Naive thymus-derived CD4-positive, alpha-beta T cell (primary cell): ENCODE measurements at regions of chrX and their contacts with region 1.

Region 1: GRCh38 chrX:56813318-56813837 is 84.3 kb downstream of the NBDY start:
- DNase-seq: peak; percentile 11 to 75 (median 62)
- ATAC-seq: peak; percentile 87
- H3K4me3 ChIP-seq: peak overlapping the region; percentile 40
- H3K4me3 Mint-ChIP-seq: peak overlapping the region; percentile 63 to 85 (median 82)
- H3K27ac ChIP-seq: peak overlapping the region; percentile 72
- H3K27ac Mint-ChIP-seq: peak overlapping the region; percentile 85 to 99 (median 95)
- H3K4me1 ChIP-seq: peaks cover 14 to 30% of the 10 kb centered on the region in 2 donors
- H3K4me1 Mint-ChIP-seq: peaks cover 19 to 52% (median 44%) of the 10 kb centered on the region in 7 donors
- H3K27me3 ChIP-seq: no peaks in the 10 kb centered on the region
- H3K27me3 Mint-ChIP-seq: no peaks in the 10 kb centered on the region

Region 2: GRCh38 chrX:56563231-56564161 is 249.9 kb before region 1 on chrX and contains the start of gene UBQLN2:
- CTCF ChIA-PET with region 1: no interaction called
- POLR2A ChIA-PET with region 1: no interaction called
- intact Hi-C with region 1: loop called (anchors 2 to 10 kb)
- DNase-seq: peak; percentile 57 to 78 (median 74)
- ATAC-seq: peak; percentile 89
- H3K4me3 ChIP-seq: peak within 1 kb of the TSS; percentile 98
- H3K4me3 Mint-ChIP-seq: peak within 1 kb of the TSS; percentile 88 to 98 (median 94)
- H3K27ac ChIP-seq: peak within 1 kb of the TSS; percentile 85
- H3K27ac Mint-ChIP-seq: peak within 1 kb of the TSS; percentile 93 to 100 (median 98)
- H3K4me1 ChIP-seq: peaks cover 4 to 5% of the 10 kb centered on the region in 2 donors
- H3K4me1 Mint-ChIP-seq: peaks cover 5 to 20% (median 15%) of the 10 kb centered on the region in 7 donors
- H3K27me3 ChIP-seq: no peaks in the 10 kb centered on the region
- H3K27me3 Mint-ChIP-seq: no peaks in the 10 kb centered on the region
- total RNA-seq, gene UBQLN2: 48.8 to 76.5 (median 56.8) TPM

Region 3: GRCh38 chrX:56793521-56794320 is 19.7 kb before region 1 on chrX:
- CTCF ChIA-PET with region 1: no interaction called
- POLR2A ChIA-PET with region 1: interaction called, 3 read pairs
- intact Hi-C with region 1: loop called in 1 of 2 experiments (anchors 1 kb)
- DNase-seq: no peak
- ATAC-seq: no peak
- H3K4me3 ChIP-seq: no peak overlapping the region
- H3K4me3 Mint-ChIP-seq: peak overlapping the region in 1 of 10 donors; percentile 25
- H3K27ac ChIP-seq: no peak overlapping the region
- H3K27ac Mint-ChIP-seq: peak overlapping the region in 8 of 9 donors; percentile 14 to 81 (median 68)
- H3K4me1 ChIP-seq: peaks cover 8 to 16% of the 10 kb centered on the region in 2 donors
- H3K4me1 Mint-ChIP-seq: peaks cover 35 to 69% (median 54%) of the 10 kb centered on the region in 7 donors
- H3K27me3 ChIP-seq: no peaks in the 10 kb centered on the region
- H3K27me3 Mint-ChIP-seq: no peaks in the 10 kb centered on the region

Region 4: DNA sequence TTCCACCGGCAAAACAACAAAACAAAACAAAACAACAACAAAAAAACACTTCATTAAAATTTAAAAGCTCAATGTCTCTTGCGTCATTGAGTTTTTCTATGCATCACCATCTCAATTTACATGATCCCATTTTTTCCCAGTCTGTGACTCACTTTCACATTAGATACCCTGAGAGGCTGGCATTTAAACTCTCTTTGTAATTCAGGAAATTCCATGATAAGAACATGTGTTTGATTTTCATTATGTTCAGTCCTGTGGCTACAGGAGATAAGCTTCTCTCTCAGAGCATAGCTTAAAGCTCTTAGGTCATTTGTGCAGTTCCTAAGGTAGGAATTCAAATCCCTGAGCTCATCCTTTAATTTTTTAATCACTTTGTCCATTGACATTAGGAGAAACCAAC is 20.2 kb after region 1 on chrX:
- CTCF ChIA-PET with region 1: no interaction called
- POLR2A ChIA-PET with region 1: no interaction called
- intact Hi-C with region 1: no loop called
- DNase-seq: no peak
- ATAC-seq: no peak
- H3K4me3 ChIP-seq: no peak overlapping the region
- H3K4me3 Mint-ChIP-seq: no peak overlapping the region
- H3K27ac ChIP-seq: no peak overlapping the region
- H3K27ac Mint-ChIP-seq: no peak overlapping the region
- H3K4me1 ChIP-seq: no peaks in the 10 kb centered on the region
- H3K4me1 Mint-ChIP-seq: peaks cover 0 to 2% (median 0%) of the 10 kb centered on the region in 7 donors
- H3K27me3 ChIP-seq: no peaks in the 10 kb centered on the region
- H3K27me3 Mint-ChIP-seq: peaks cover 0 to under 1% (median 0%) of the 10 kb centered on the region in 5 donors

Region 5: DNA sequence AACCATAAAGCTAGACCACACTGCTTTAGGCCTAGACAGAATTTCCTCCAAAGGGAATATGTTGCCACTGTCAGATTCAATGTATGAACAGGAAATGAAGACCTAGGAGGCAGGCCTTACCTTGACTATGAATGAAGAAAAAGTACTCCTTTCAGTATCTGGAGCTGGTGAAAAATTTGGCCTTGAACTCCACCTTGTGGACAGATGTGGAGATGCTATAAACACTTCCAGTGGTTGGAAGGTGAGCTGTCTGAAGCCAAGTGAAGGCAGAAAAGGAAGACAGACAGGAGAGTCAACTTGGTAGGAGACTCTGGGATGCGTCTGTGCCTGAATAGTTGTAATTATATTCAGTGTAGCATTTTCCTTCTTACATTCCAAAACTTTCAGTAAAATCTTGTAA is 164.8 kb after region 1 on chrX:
- CTCF ChIA-PET with region 1: interaction called, 3 read pairs
- POLR2A ChIA-PET with region 1: no interaction called
- intact Hi-C with region 1: loop called in 1 of 2 experiments (anchors 2 kb)
- DNase-seq: peak in 8 of 9 donors; percentile 19 to 72 (median 56)
- ATAC-seq: peak; percentile 72
- H3K4me3 ChIP-seq: no peak overlapping the region
- H3K4me3 Mint-ChIP-seq: no peak overlapping the region
- H3K27ac ChIP-seq: no peak overlapping the region
- H3K27ac Mint-ChIP-seq: peak overlapping the region in 5 of 9 donors; percentile 4 to 75 (median 27)
- H3K4me1 ChIP-seq: no peaks in the 10 kb centered on the region
- H3K4me1 Mint-ChIP-seq: peaks cover 0 to 6% (median 0%) of the 10 kb centered on the region in 7 donors
- H3K27me3 ChIP-seq: no peaks in the 10 kb centered on the region
- H3K27me3 Mint-ChIP-seq: no peaks in the 10 kb centered on the region

Region 6: DNA sequence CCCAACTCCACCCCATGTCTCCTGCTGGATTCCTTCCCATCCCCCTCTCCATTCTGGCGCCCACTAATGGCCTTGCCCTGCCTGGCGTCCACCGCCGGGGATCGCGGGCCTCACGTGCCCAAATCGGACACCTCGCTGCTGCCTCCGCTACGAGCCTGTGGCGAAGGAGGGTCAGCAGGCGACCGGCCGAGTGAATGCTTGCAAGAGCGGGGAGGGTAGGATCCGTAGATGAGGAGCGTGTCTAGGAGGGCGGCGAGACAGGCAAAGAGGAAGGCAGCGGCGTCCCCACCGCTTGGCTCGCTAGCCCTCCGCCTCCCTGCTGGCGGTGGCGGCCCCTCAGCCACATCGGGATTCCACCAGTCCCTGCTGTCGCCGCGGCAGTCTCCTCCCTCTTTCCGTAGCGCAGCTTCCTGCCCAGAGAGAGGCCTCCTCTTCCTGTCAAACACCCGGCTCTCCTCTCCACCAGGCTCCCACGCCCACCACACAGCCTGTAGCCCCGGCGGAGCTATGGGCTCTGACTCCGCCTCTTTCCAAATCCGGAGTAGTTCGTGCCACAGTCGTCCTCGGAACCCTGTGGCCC is 307.9 kb after region 1 on chrX and contains the start of gene SPIN2B:
- CTCF ChIA-PET with region 1: no interaction called
- POLR2A ChIA-PET with region 1: no interaction called
- intact Hi-C with region 1: loop called in 1 of 2 experiments (anchors 5 kb)
- DNase-seq: peak; percentile 27 to 76 (median 68)
- ATAC-seq: peak; percentile 99
- H3K4me3 ChIP-seq: peak within 1 kb of the TSS; percentile 57
- H3K4me3 Mint-ChIP-seq: peak within 1 kb of the TSS; percentile 90 to 95 (median 93)
- H3K27ac ChIP-seq: peak within 1 kb of the TSS; percentile 62
- H3K27ac Mint-ChIP-seq: peak within 1 kb of the TSS; percentile 72 to 96 (median 91)
- H3K4me1 ChIP-seq: no peaks in the 10 kb centered on the region
- H3K4me1 Mint-ChIP-seq: peaks cover 5 to 14% (median 11%) of the 10 kb centered on the region in 7 donors
- H3K27me3 ChIP-seq: no peaks in the 10 kb centered on the region
- H3K27me3 Mint-ChIP-seq: no peaks in the 10 kb centered on the region
- total RNA-seq, gene SPIN2B: 9.0 to 19.7 (median 14.0) TPM

Region 7: GRCh38 chrX:57595381-57595811 is 782.0 kb after region 1 on chrX:
- CTCF ChIA-PET with region 1: no interaction called
- POLR2A ChIA-PET with region 1: no interaction called
- intact Hi-C with region 1: loop called (anchors 10 kb)
- DNase-seq: no peak
- ATAC-seq: no peak
- H3K4me3 ChIP-seq: no peak overlapping the region
- H3K4me3 Mint-ChIP-seq: peak overlapping the region; percentile 6 to 87 (median 68)
- H3K27ac ChIP-seq: no peak overlapping the region
- H3K27ac Mint-ChIP-seq: peak overlapping the region in 5 of 9 donors; percentile 0 to 79 (median 50)
- H3K4me1 ChIP-seq: peaks cover 0 to 18% of the 10 kb centered on the region in 2 donors
- H3K4me1 Mint-ChIP-seq: peaks cover 8 to 54% (median 39%) of the 10 kb centered on the region in 7 donors
- H3K27me3 ChIP-seq: no peaks in the 10 kb centered on the region
- H3K27me3 Mint-ChIP-seq: no peaks in the 10 kb centered on the region